Activated CD4-positive, alpha-beta T cell treated with anti-CD3 and anti-CD28 coated beads for 36 hours (primary cell): ENCODE measurements at regions of chr13 and their contacts with region 1.

Region 1: GRCh38 chr13:46288570-46289259 is 77.0 kb downstream of the LRRC63 start:
- DNase-seq: no peak
- ATAC-seq: peak; percentile 82
- H3K4me3 Mint-ChIP-seq: no peak overlapping the region
- H3K27ac Mint-ChIP-seq: no peak overlapping the region
- H3K4me1 Mint-ChIP-seq: peaks cover 27% of the 10 kb centered on the region
- H3K27me3 Mint-ChIP-seq: no peaks in the 10 kb centered on the region

Region 2: DNA sequence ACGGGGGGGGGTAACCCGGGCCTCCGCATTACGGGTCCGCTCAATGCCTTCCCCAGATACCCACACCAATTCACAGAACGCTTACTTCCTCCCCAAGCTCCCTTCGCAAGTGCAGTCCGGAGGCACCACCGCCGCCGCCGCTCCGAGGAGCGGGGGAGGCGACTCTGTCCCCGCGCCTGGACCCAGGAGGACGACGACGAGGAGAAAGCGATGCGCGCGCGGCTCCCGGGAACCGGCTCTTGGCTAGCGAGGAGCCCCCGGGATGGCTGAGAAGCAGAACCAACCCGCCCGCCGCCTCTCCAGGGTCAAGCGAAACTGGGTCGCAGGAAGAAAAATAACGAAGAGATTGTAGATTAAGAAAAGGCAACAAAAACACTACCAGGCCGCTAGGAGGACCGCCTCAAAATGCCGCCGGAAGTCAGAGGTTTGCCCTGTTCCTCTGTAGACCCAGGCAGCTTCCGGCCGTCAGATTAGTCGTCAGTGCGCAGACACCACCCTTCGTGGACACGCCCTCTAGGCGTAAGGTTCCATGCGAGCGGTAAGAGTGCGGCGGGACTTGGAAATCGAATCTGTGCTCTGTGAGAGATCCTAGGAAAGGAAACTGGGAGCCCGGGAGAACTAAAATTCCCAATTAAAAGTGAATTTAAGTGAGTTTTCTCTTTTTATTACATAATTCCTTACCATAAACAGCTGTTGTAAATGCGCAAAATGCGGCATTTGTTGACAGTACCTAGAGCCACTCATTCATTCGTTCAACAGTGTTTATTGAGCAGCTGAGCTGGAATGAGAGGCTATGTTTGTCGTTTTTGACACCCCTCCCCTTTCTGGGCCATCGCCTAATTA is 236.2 kb before region 1 on chr13 and contains the start of gene ZC3H13:
- CTCF ChIA-PET with region 1: no interaction called
- POLR2A ChIA-PET with region 1: no interaction called
- intact Hi-C with region 1: loop called in 1 of 2 experiments (anchors 2 kb)
- DNase-seq: peak; percentile 96
- ATAC-seq: peak; percentile 99
- H3K4me3 Mint-ChIP-seq: peak within 1 kb of the TSS; percentile 83
- H3K27ac Mint-ChIP-seq: peak within 1 kb of the TSS; percentile 94
- H3K4me1 Mint-ChIP-seq: peaks cover 34% of the 10 kb centered on the region
- H3K27me3 Mint-ChIP-seq: peaks cover 2% of the 10 kb centered on the region
- total RNA-seq, gene ZC3H13: 38.5 to 52.8 TPM

Region 3: GRCh38 chr13:46278474-46278873 is 10.2 kb before region 1 on chr13:
- CTCF ChIA-PET with region 1: interaction called, 16 read pairs
- POLR2A ChIA-PET with region 1: no interaction called
- intact Hi-C with region 1: no loop called
- DNase-seq: no peak
- ATAC-seq: no peak
- H3K4me3 Mint-ChIP-seq: no peak overlapping the region
- H3K27ac Mint-ChIP-seq: no peak overlapping the region
- H3K4me1 Mint-ChIP-seq: peaks cover 4% of the 10 kb centered on the region
- H3K27me3 Mint-ChIP-seq: no peaks in the 10 kb centered on the region